B cell (primary cell): ENCODE measurements at regions of chr10 and their contacts with region 1.

Region 1: GRCh38 chr10:61903221-61903927 is 1.9 kb downstream of the ARID5B start:
- DNase-seq: peak; percentile 91
- ATAC-seq: peak; percentile 55
- H3K4me3 ChIP-seq: peak overlapping the region; percentile 69 to 98 (median 80)
- H3K4me3 Mint-ChIP-seq: peak overlapping the region; percentile 98
- H3K27ac ChIP-seq: peak overlapping the region; percentile 95 to 97
- H3K27ac Mint-ChIP-seq: peak overlapping the region; percentile 99
- H3K4me1 ChIP-seq: peaks cover 40 to 47% of the 10 kb centered on the region in 2 donors
- H3K4me1 Mint-ChIP-seq: peaks cover 49% of the 10 kb centered on the region
- H3K27me3 ChIP-seq: no peaks in the 10 kb centered on the region
- H3K27me3 Mint-ChIP-seq: no peaks in the 10 kb centered on the region
- CTCF ChIP-seq: peak; percentile 38

Region 2: DNA sequence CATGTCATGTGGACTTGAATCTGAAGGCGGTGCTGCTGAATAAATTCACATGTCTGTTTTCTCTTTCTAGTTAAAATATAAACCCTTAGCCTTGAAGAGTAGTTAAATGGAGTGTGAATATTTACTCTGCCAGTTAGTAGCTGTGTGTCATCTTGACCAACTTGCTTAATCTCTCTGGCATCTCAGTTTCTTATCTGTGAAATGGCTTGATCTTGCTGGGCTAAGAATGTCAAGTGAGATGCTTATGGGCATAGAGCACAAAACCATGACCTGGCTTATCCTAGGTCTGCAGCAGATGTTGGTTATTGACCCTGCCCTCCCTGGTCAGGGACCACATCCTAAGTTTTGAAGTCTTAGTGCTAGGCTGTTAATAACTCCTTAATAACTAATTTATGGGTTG is 14.8 kb after region 1 on chr10:
- CTCF ChIA-PET with region 1: interaction called, 3 read pairs
- POLR2A ChIA-PET with region 1: interaction called, 6 read pairs
- intact Hi-C with region 1: loop called (anchors 2 kb)
- DNase-seq: no peak
- ATAC-seq: no peak
- H3K4me3 ChIP-seq: no peak overlapping the region
- H3K4me3 Mint-ChIP-seq: peak overlapping the region; percentile 32
- H3K27ac ChIP-seq: peak overlapping the region in 1 of 2 donors; percentile 0
- H3K27ac Mint-ChIP-seq: peak overlapping the region; percentile 71
- H3K4me1 ChIP-seq: peaks cover 21 to 27% of the 10 kb centered on the region in 2 donors
- H3K4me1 Mint-ChIP-seq: peaks cover 71% of the 10 kb centered on the region
- H3K27me3 ChIP-seq: no peaks in the 10 kb centered on the region
- H3K27me3 Mint-ChIP-seq: no peaks in the 10 kb centered on the region
- CTCF ChIP-seq: no peak

Region 3: DNA sequence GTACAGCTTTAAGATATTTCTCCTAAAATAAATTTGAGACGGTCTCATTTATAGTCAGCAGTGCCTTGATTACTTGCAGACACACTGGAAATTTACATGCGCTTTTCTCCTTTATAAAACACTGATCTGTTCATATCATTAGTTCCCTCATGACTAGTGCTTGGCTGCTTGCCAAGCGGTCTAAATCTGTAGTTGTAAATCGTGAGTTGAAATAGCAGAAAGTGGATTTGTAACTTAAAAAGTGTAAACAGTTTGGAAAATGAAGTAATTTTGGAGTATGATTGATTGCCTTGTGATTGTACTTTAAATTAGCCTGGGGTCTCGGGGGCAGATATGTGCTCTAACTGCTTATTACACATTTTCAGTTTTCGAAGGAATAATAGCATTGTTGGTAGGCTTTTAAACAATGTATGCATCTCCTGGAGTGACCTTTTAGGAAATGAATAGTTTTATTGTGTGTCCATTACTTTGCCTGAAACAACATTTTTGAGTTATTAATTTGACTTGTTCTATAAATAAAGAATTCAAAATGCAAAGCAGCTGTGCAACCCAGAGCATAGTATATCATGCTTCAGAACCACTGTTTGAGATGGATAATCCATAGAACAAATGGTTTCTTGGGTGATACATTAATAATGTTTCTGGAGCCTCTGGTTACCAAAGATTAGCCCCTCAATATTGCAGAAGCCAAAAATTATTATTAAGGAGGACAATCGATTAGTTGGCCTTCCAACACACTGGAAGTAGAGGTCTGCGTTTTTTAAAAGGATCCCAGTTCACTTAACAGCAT is 71.4 kb after region 1 on chr10:
- CTCF ChIA-PET with region 1: no interaction called
- POLR2A ChIA-PET with region 1: interaction called, 12 read pairs
- intact Hi-C with region 1: no loop called
- DNase-seq: peak; percentile 47
- ATAC-seq: no peak
- H3K4me3 ChIP-seq: no peak overlapping the region
- H3K4me3 Mint-ChIP-seq: peak overlapping the region; percentile 47
- H3K27ac ChIP-seq: peak overlapping the region in 1 of 2 donors; percentile 53
- H3K27ac Mint-ChIP-seq: peak overlapping the region; percentile 80
- H3K4me1 ChIP-seq: peaks cover 35 to 50% of the 10 kb centered on the region in 2 donors
- H3K4me1 Mint-ChIP-seq: peaks cover 79% of the 10 kb centered on the region
- H3K27me3 ChIP-seq: no peaks in the 10 kb centered on the region
- H3K27me3 Mint-ChIP-seq: no peaks in the 10 kb centered on the region
- CTCF ChIP-seq: no peak

Region 4: GRCh38 chr10:61992671-61993668 is 89.6 kb after region 1 on chr10:
- CTCF ChIA-PET with region 1: interaction called, 12 read pairs
- POLR2A ChIA-PET with region 1: interaction called, 19 read pairs
- intact Hi-C with region 1: loop called (anchors 2 kb)
- DNase-seq: peak; percentile 86
- ATAC-seq: peak; percentile 77
- H3K4me3 ChIP-seq: peak overlapping the region in 1 of 5 experiments; percentile 42
- H3K4me3 Mint-ChIP-seq: peak overlapping the region; percentile 73
- H3K27ac ChIP-seq: peak overlapping the region; percentile 74 to 80
- H3K27ac Mint-ChIP-seq: peak overlapping the region; percentile 92
- H3K4me1 ChIP-seq: peaks cover 48 to 58% of the 10 kb centered on the region in 2 donors
- H3K4me1 Mint-ChIP-seq: peaks cover 85% of the 10 kb centered on the region
- H3K27me3 ChIP-seq: no peaks in the 10 kb centered on the region
- H3K27me3 Mint-ChIP-seq: no peaks in the 10 kb centered on the region
- CTCF ChIP-seq: no peak

Region 5: GRCh38 chr10:62016623-62017490 is 113.5 kb after region 1 on chr10:
- CTCF ChIA-PET with region 1: interaction called, 48 read pairs
- POLR2A ChIA-PET with region 1: interaction called, 34 read pairs
- intact Hi-C with region 1: loop called (anchors 1 kb)
- DNase-seq: peak; percentile 88
- ATAC-seq: peak; percentile 71
- H3K4me3 ChIP-seq: peak overlapping the region in 3 of 5 experiments; percentile 10 to 50 (median 11)
- H3K4me3 Mint-ChIP-seq: peak overlapping the region; percentile 76
- H3K27ac ChIP-seq: peak overlapping the region; percentile 94 to 98
- H3K27ac Mint-ChIP-seq: peak overlapping the region; percentile 93
- H3K4me1 ChIP-seq: peaks cover 75 to 76% of the 10 kb centered on the region in 2 donors
- H3K4me1 Mint-ChIP-seq: peaks cover 80% of the 10 kb centered on the region
- H3K27me3 ChIP-seq: no peaks in the 10 kb centered on the region
- H3K27me3 Mint-ChIP-seq: no peaks in the 10 kb centered on the region
- CTCF ChIP-seq: no peak

Region 6: GRCh38 chr10:62373995-62374861 is 470.9 kb after region 1 on chr10 and contains the start of gene ZNF365:
- CTCF ChIA-PET with region 1: no interaction called
- POLR2A ChIA-PET with region 1: no interaction called
- intact Hi-C with region 1: loop called (anchors 10 kb)
- DNase-seq: peak; percentile 57
- ATAC-seq: peak; percentile 72
- H3K4me3 ChIP-seq: peak within 1 kb of the TSS in 4 of 5 experiments; percentile 29 to 67 (median 48)
- H3K4me3 Mint-ChIP-seq: peak within 1 kb of the TSS; percentile 87
- H3K27ac ChIP-seq: no peak within 1 kb of the TSS
- H3K27ac Mint-ChIP-seq: no peak within 1 kb of the TSS
- H3K4me1 ChIP-seq: peaks cover 12% of the 10 kb centered on the region in 2 donors
- H3K4me1 Mint-ChIP-seq: peaks cover 11% of the 10 kb centered on the region
- H3K27me3 ChIP-seq: peaks cover 0 to 15% (median 9%) of the 10 kb centered on the region in 4 experiments
- H3K27me3 Mint-ChIP-seq: peaks cover 27% of the 10 kb centered on the region
- CTCF ChIP-seq: no peak
- total RNA-seq, gene ZNF365: 0.17 and 0.34 TPM in 2 replicates